Activated T-helper 1 cell treated with anti-CD3 and anti-CD28 coated beads, Interleukin-12 subunit alpha, Interleukin-12 subunit beta, Interleukin-2, Interleukin-4 antibody, amounts not matched to agents 30 ng/mL and 10 ng/mL and 1 ng/mL, durations not matched to agents 14 hours and 24 hours and 36 hours (primary cell): ENCODE measurements at regions of chr7 and their contacts with region 1.

Region 1: DNA sequence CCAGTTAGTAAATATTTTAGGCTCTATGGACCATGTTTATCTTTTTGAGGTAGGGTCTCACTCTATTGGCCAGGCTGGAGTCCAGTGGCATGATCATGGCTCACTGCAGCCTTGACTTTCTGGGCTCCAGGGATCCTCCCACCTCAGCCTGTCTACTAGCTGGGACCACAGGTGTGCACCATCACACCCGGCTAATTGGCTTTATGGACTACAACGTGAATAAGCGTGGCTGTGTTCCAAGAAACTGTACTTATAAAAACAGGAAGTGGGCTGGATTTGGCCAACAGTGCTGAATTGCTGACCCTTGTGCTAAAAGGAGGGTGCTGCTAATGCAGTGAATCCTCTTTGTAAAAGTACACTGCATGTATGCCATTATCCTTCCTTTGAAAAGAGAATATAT is 111.7 kb upstream of the CDK13 start:
- DNase-seq: no peak
- H3K4me3 Mint-ChIP-seq: no peak overlapping the region
- H3K27ac Mint-ChIP-seq: no peak overlapping the region
- H3K4me1 Mint-ChIP-seq: no peaks in the 10 kb centered on the region
- H3K27me3 Mint-ChIP-seq: peaks cover 53% of the 10 kb centered on the region

Region 2: DNA sequence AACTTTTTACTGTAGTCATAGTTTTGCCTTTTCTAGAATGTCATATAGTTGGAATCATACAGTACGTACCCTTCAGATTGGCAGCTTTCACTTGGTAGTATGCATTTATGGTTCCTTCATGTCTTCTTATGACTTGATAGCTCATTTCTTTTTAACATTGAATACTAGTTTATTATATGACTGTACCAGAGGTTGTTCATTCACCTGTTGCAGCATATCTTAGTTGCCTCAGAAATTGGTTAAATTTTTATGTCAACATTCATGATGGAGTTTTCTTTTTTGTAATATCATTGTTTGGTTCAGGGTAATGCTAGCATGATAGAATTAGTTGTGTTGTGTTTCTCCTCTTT is 17.0 kb after region 1 on chr7:
- intact Hi-C with region 1: loop called (anchors 1 kb)
- DNase-seq: no peak
- H3K4me3 Mint-ChIP-seq: peak overlapping the region; percentile 70
- H3K27ac Mint-ChIP-seq: no peak overlapping the region
- H3K4me1 Mint-ChIP-seq: peaks cover 12% of the 10 kb centered on the region
- H3K27me3 Mint-ChIP-seq: peaks cover 34% of the 10 kb centered on the region